Activated CD4-positive, alpha-beta memory T cell treated with anti-CD3 and anti-CD28 coated beads for 36 hours (primary cell): ENCODE measurements at regions of chr13 and their contacts with region 1.

Region 1: DNA sequence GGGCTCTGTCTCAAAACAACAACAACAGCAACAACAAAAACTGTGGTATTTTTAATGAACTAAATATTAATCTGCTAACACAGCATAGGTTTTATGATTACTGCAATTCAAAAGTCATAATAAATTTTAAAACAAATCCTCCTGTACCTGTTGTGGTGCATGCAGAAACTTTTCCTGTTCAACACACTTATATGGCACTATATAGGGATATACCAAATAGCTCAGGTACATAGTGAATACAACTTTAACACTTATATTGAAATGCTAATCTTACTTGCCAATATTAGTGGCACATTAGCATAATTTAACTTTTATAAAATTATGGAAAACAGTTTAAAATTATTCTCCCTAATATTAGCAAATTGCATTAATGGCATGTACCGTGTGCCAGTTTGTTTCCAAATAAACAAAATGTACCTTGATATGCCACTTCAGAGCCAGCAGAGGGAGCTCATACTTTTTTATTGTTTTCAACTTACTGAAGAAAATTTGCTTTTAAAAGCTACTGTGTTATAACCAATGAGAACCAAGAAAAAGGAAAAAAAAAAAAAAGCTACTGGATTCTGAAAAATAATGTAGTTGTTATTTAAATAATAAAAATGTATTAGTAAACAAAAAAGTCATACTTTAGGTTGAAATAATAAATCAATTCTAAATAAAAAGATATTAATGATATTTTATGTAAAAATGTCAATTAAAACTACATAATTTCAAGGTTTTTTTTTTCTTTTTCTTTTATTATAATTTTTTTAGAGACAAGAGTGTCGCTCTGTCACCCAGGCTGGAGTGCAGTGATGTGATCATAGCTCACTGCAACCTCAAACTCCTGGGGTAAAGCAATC is 18.0 kb upstream of the RBM26 start:
- DNase-seq: no peak
- H3K4me3 Mint-ChIP-seq: no peak overlapping the region
- H3K27ac Mint-ChIP-seq: no peak overlapping the region
- H3K4me1 Mint-ChIP-seq: peaks cover 22% of the 10 kb centered on the region
- H3K27me3 Mint-ChIP-seq: no peaks in the 10 kb centered on the region

Region 2: GRCh38 chr13:79440958-79441528 is 17.0 kb after region 1 on chr13:
- CTCF ChIA-PET with region 1: interaction called, 13 read pairs
- POLR2A ChIA-PET with region 1: no interaction called
- intact Hi-C with region 1: no loop called
- DNase-seq: no peak
- H3K4me3 Mint-ChIP-seq: no peak overlapping the region
- H3K27ac Mint-ChIP-seq: no peak overlapping the region
- H3K4me1 Mint-ChIP-seq: peaks cover 11% of the 10 kb centered on the region
- H3K27me3 Mint-ChIP-seq: no peaks in the 10 kb centered on the region

Region 3: DNA sequence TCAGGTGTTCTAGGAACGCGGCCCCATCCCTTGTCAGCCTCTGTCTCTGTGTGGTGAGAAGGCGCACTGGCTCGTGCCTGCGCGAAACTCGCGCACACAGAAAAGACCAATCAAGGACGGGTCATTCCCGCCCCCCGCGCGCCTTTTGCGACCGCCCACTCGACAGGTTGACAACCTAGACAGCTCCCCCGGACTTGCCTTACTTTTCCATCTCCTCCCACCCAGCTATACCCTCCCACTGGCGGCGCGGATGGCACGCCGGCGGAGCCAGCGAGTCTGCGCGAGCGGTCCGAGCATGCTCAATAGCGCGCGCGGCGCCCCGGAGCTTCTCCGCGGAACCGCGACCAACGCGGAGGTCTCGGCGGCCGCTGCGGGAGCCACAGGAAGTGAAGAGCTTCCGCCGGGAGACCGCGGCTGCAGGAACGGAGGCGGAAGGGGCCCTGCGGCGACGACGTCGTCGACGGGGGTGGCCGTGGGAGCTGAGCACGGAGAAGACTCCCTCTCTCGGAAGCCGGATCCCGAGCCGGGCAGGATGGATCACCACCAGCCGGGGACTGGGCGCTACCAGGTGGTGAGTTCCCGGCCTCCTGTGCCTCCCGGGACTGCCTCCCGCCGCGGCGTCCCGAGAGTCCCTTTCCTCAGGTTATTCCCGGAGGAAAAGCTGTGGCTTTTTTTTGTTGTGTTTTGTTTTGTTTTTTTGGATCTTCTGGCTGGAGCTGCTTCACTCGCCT is 57.1 kb after region 1 on chr13 and contains the start of gene NDFIP2:
- CTCF ChIA-PET with region 1: interaction called, 35 read pairs
- POLR2A ChIA-PET with region 1: interaction called, 12 read pairs
- intact Hi-C with region 1: loop called (anchors 1 kb)
- DNase-seq: peak; percentile 94
- H3K4me3 Mint-ChIP-seq: peak within 1 kb of the TSS; percentile 90
- H3K27ac Mint-ChIP-seq: peak within 1 kb of the TSS; percentile 98
- H3K4me1 Mint-ChIP-seq: peaks cover 56% of the 10 kb centered on the region
- H3K27me3 Mint-ChIP-seq: no peaks in the 10 kb centered on the region
- total RNA-seq, gene NDFIP2: 175 to 178 TPM

Region 4: DNA sequence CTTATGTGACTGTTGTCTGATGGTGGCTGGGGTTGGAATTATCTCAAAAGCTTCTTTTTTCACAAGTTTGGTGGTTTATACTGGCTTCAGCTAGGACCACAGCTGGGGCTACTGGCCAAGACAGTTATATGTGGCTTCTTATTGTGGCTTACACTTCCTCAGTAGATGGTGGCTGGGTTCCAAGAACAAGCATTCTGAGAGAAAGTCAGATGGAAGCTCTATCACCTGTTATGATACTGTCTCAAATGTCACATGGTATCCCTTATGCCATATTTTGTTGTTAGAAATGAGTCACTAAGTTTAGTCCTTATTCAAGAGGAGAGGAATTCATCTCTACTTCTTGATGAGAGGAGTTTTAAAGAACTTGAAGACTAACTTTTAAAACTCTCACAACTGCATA is 98.6 kb after region 1 on chr13:
- CTCF ChIA-PET with region 1: interaction called, 19 read pairs
- POLR2A ChIA-PET with region 1: no interaction called
- intact Hi-C with region 1: no loop called
- DNase-seq: peak; percentile 55
- H3K4me3 Mint-ChIP-seq: peak overlapping the region; percentile 4
- H3K27ac Mint-ChIP-seq: peak overlapping the region; percentile 80
- H3K4me1 Mint-ChIP-seq: peaks cover 22% of the 10 kb centered on the region
- H3K27me3 Mint-ChIP-seq: no peaks in the 10 kb centered on the region

Region 5: DNA sequence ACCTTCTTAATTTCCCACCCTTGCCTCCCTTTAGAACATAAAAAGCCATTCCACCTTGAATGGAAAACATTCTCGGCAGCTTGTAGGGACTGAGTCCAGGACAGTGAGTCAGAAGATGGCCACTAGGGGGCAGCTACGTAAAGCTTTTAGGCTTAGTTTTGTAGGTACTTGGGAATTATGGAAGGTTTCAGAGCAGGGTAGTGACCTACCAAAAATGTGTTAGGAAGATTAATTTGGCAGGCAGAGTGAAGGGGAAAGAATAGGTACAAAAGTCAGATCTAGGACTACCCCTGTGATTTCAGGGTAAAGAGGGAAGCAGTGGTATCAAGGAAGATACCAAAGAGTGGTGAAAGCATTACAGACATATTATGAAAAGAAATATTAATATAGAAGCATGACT is 255.3 kb after region 1 on chr13:
- CTCF ChIA-PET with region 1: interaction called, 11 read pairs
- POLR2A ChIA-PET with region 1: no interaction called
- intact Hi-C with region 1: loop called (anchors 10 kb)
- DNase-seq: peak; percentile 52
- H3K4me3 Mint-ChIP-seq: no peak overlapping the region
- H3K27ac Mint-ChIP-seq: no peak overlapping the region
- H3K4me1 Mint-ChIP-seq: no peaks in the 10 kb centered on the region
- H3K27me3 Mint-ChIP-seq: no peaks in the 10 kb centered on the region

Region 6: DNA sequence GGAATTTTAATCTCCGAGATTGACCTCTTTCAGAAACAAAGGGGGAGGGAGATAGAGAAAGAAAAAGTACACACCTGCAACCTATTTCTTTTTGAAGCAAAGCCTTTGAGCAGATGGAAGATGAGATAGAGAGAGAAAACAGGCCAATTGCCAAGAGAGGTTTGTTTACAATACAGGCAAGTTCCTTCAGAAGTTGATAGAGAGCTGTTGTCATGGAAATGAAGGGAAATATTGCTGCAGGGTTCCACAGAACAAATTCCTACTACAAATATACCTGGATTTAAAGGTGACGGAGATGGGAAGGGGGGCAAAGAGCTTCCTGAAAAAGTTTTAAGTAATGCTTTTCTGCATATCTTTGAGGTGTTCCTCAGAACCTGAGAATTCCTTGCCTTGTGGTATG is 445.3 kb after region 1 on chr13:
- CTCF ChIA-PET with region 1: no interaction called
- POLR2A ChIA-PET with region 1: no interaction called
- intact Hi-C with region 1: no loop called
- DNase-seq: no peak
- H3K4me3 Mint-ChIP-seq: no peak overlapping the region
- H3K27ac Mint-ChIP-seq: no peak overlapping the region
- H3K4me1 Mint-ChIP-seq: no peaks in the 10 kb centered on the region
- H3K27me3 Mint-ChIP-seq: no peaks in the 10 kb centered on the region